Aorta (tissue), 5 donors: ENCODE measurements at regions of chr2 and their contacts with region 1.

Region 1: DNA sequence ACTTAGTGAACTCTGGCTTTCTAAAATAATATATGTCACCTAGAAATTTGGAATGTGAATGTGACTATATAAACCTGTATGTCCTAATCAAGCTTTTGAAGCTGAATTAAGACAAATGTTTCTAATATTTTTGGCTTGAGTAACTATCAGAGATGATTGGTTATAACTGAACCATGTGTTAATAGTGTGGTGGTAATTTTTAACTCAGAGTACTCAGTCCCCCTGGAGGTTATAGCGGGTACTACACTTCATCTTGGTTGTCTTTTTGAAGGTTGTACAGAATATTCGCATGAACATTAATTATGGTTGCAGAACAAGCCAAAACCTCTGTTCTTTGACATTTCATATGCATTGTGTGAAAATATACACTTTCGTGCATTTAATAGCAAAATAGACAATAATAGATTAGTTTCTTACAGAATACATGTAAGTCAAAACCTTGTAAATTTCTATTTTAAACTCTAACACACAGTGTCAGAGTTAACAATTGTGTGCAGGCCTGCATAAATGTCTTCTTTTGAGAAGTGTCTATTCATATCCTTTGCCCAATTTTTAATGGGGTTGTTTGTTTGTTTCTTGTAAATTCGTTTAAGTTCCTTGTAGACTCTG is 86.0 kb downstream of the OSBPL6 start:
- DNase-seq: no peak
- ATAC-seq: peak; percentile 81
- H3K4me3 ChIP-seq: no peak overlapping the region
- H3K27ac ChIP-seq: no peak overlapping the region
- H3K4me1 ChIP-seq: no peaks in the 10 kb centered on the region
- H3K27me3 ChIP-seq: no peaks in the 10 kb centered on the region

Region 2: DNA sequence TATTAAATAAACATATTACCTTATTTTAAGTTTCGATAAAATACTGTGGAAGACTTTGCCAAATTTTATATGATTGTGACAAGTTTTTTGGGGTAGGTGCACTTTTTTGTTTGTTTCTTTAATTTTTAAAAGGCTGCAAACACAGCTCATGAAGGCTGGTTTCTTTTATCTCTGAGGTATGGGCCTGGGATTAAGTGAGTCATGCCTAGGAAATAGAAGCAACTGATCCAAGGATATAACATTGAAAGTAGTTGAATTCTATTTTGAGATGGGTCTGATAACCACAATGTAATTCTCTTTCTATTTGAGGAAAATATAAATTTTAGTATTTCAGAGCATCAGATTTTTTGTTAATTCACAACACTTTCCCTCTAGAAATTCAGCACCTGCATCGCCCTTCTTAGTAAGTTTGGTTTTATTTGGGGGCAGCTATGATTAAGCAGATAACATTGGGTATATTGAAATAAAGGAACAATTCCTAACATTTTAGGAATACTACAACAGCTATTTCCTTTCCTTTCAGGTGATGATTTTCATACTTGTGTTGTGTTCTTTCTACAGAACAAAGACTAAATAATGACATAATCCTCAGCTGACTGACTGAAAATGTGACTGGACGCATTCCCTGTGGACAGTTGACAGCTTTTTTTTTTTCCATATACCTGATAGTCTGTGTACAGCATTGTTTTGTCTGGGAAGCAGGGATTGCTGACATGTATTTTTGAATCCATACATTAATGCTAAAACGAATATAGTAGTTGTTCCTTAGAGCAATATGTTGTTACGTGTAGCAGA is 151.3 kb before region 1 on chr2:
- intact Hi-C with region 1: loop called (anchors 5 kb)
- DNase-seq: no peak
- ATAC-seq: no peak
- H3K4me3 ChIP-seq: no peak overlapping the region
- H3K27ac ChIP-seq: no peak overlapping the region
- H3K4me1 ChIP-seq: no peaks in the 10 kb centered on the region
- H3K27me3 ChIP-seq: no peaks in the 10 kb centered on the region

Region 3: DNA sequence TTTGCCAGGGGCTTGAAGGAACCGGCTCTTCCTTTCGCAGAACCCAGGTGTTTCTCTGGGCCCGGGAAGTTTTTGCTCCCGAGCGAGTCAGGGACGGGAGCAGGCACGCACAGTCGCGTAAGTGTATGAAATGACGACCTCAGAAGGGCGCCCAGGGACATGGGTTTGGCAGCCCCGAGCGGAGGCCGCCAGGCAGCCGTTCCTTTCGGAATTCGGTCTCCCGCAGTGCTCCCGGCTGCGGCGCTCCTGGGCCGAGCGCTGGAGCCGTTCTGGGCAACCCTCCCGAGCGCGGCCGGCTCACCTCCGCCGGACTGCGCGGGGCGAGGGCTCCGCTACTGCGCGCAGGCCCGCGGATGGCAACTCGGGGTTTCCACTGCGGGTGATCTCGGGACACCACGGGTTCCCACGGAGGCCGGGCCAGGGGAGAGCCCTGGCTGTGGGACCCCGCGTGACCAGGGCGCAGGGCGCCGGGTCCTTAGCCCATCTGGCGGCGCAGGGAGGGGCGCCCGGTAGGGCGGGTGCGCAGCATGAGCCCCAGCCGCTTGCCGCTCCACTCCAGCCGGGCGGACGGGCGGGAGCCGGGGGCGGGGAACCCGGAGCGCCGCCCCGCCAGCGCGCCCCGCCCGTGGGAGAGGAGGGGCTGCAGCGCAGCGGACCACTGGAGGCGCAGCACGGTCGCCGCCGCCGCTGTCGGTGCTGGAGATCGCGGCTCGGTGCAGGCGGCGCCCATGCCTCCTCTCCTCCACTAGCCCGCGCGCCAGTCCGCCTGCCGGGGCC is 86.3 kb before region 1 on chr2 and contains the start of gene OSBPL6:
- intact Hi-C with region 1: loop called (anchors 5 to 10 kb)
- DNase-seq: peak; percentile 85 to 92
- ATAC-seq: peak; percentile 97
- H3K4me3 ChIP-seq: peak within 1 kb of the TSS; percentile 73 to 78
- H3K27ac ChIP-seq: peak within 1 kb of the TSS; percentile 16 to 73
- H3K4me1 ChIP-seq: no peaks in the 10 kb centered on the region
- H3K27me3 ChIP-seq: no peaks in the 10 kb centered on the region
- total RNA-seq, gene OSBPL6: 2.1 to 2.4 TPM

Region 4: GRCh38 chr2:178419123-178419522 is 138.8 kb after region 1 on chr2:
- intact Hi-C with region 1: no loop called
- DNase-seq: no peak
- ATAC-seq: no peak
- H3K4me3 ChIP-seq: no peak overlapping the region
- H3K27ac ChIP-seq: no peak overlapping the region
- H3K4me1 ChIP-seq: no peaks in the 10 kb centered on the region
- H3K27me3 ChIP-seq: no peaks in the 10 kb centered on the region

Region 5: DNA sequence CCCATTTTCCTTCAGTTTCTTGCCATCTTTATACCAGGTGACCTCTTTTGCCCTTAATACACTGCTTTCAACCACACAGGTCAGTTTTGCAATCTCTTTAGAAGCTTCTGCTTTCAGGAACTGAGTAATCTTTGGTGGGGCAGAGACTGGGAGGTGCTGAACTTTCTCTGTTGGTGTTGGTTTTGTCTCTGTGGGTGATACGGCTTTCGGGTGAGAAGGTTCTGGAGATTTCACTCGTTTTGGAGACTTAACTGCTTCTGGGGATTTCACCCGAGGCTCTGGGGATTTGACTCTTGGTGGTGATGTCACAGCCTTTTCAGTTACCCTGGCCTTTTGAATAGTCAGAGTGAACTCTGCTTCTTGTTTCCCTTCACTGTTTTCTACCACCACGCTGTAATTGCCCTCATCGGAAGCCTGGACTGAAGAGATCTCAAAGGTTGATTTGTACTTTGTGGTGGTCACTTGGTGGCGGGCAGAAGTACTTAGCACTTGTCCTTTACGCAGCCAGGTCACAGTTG is 250.3 kb after region 1 on chr2:
- intact Hi-C with region 1: no loop called
- DNase-seq: no peak
- ATAC-seq: no peak
- H3K4me3 ChIP-seq: no peak overlapping the region
- H3K27ac ChIP-seq: no peak overlapping the region
- H3K4me1 ChIP-seq: no peaks in the 10 kb centered on the region
- H3K27me3 ChIP-seq: no peaks in the 10 kb centered on the region